IMR-90 (cell line): ENCODE measurements at regions of chr12 and their contacts with region 1.

Region 1: GRCh38 chr12:111673503-111673902 is 12.3 kb downstream of the BRAP start:
- DNase-seq: peak; percentile 31
- ATAC-seq: peak; percentile 69
- H3K4me3 ChIP-seq: no peak overlapping the region
- H3K27ac ChIP-seq: no peak overlapping the region
- H3K4me1 ChIP-seq: no peaks in the 10 kb centered on the region
- H3K27me3 ChIP-seq: no peaks in the 10 kb centered on the region
- CTCF ChIP-seq: peak; percentile 56
- POLR2A ChIP-seq: no peak
- RAD21 ChIP-seq: peak; percentile 66

Region 2: DNA sequence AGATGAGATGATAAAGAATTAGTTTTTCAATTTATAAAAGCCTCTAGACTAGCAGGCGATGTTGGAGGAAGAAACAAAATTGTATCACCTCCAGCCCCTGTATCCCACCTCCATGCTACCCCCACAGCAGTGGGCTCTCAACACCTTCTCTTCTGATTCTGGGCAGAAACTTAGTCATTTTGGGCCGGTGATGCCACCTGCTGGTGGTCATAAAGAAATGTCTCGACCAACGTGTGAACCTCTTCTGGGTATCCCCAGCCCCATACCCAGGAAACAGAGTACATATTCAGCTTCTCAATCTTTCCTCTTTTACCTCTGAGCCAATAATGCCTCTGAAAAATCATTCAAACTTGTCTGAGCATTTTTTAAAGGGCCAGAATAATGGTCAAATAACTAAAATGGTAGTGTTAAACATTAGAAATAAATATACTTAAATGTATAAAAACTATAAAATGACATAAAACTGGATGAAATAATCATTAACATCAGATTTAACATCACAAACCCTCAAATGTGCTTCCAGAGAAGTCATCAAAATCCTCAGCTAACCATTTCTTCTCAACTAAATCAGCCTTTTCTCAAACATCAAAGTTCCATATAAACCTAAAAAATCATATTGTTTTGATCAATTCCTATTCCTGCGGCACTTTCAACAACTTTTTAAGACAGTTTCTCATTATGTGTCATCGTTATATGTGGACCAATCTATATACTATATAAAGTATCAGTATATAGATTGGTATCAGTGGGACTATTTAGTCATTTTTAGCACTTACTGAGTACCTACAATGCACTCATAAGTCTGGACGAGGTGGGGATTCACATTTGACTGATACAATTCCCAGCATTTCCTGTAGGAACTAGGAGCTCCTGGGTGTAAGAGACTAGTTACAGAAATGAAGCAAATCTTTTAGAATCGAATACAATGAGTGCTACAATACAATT is 143.8 kb before region 1 on chr12:
- CTCF ChIA-PET with region 1: no interaction called
- POLR2A ChIA-PET with region 1: no interaction called
- dilution Hi-C with region 1: no loop called
- in situ Hi-C with region 1: no loop called
- intact Hi-C with region 1: loop called (anchors 5 kb)
- DNase-seq: peak; percentile 59
- ATAC-seq: peak; percentile 87
- H3K4me3 ChIP-seq: no peak overlapping the region
- H3K27ac ChIP-seq: no peak overlapping the region
- H3K4me1 ChIP-seq: no peaks in the 10 kb centered on the region
- H3K27me3 ChIP-seq: no peaks in the 10 kb centered on the region
- CTCF ChIP-seq: peak; percentile 59
- POLR2A ChIP-seq: no peak
- RAD21 ChIP-seq: peak; percentile 44

Region 3: DNA sequence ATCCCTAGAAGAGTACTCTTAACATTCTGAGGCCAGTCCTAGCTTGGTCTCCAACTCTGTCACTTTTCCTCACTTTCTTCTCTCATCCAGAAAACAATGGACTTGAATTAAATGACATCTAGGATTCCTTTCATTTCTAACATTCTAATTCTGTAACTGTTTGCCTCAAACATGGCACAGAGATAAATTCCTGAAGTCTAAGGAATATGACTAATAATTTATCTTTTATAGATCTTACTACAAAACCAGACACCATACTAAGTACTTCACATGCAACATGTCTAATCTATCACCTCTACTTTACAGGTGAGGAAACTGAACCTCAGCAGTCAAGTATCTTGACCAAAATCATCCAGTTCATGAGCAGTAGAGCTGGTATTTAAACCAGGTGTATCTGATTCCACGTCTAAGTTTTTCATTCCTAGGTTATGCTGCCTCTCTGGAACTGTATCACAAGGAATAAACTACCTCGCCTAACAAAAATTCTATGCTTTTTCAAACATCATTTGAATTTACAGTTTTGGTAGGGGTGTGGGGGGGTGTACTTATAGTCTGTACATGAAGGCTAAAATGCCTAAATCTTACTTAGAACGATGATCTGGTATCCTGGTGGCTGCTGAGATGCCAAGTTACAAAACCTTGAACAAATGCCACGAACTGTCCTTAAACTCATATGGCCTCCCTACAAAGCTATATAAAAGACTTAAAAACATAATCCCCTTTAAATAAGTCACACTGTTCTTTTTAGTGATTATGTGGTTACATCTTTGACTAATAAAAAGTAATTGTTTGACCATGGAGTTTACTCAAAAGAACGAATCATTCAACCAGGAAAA is 116.0 kb before region 1 on chr12:
- CTCF ChIA-PET with region 1: no interaction called
- POLR2A ChIA-PET with region 1: no interaction called
- dilution Hi-C with region 1: no loop called
- in situ Hi-C with region 1: no loop called
- intact Hi-C with region 1: loop called (anchors 10 kb)
- DNase-seq: peak; percentile 16
- ATAC-seq: peak; percentile 69
- H3K4me3 ChIP-seq: no peak overlapping the region
- H3K27ac ChIP-seq: no peak overlapping the region
- H3K4me1 ChIP-seq: peaks cover 9% of the 10 kb centered on the region
- H3K27me3 ChIP-seq: no peaks in the 10 kb centered on the region
- CTCF ChIP-seq: no peak
- POLR2A ChIP-seq: no peak
- RAD21 ChIP-seq: no peak